ENCODE measurements at regions of chr12 and their contacts with region 1.

Region 1: GRCh38 chr12:46372544-46373110 is at the start of gene SLC38A2:
- DNase-seq: peak; percentile 98
- ATAC-seq: peak; percentile 84
- H3K4me3 Mint-ChIP-seq: peak within 1 kb of the TSS; percentile 97
- H3K27ac Mint-ChIP-seq: peak within 1 kb of the TSS; percentile 99
- H3K4me1 Mint-ChIP-seq: peaks cover 55% of the 10 kb centered on the region
- H3K27me3 Mint-ChIP-seq: no peaks in the 10 kb centered on the region
- total RNA-seq, gene SLC38A2: 211 to 296 TPM

Region 2: GRCh38 chr12:45878630-45879255 is 493.9 kb before region 1 on chr12:
- CTCF ChIA-PET with region 1: no interaction called
- POLR2A ChIA-PET with region 1: no interaction called
- intact Hi-C with region 1: no loop called
- DNase-seq: peak; percentile 26
- ATAC-seq: peak; percentile 57
- H3K4me3 Mint-ChIP-seq: no peak overlapping the region
- H3K27ac Mint-ChIP-seq: peak overlapping the region; percentile 75
- H3K4me1 Mint-ChIP-seq: peaks cover 30% of the 10 kb centered on the region
- H3K27me3 Mint-ChIP-seq: no peaks in the 10 kb centered on the region

Region 3: GRCh38 chr12:46198913-46199312 is 173.7 kb before region 1 on chr12:
- CTCF ChIA-PET with region 1: no interaction called
- POLR2A ChIA-PET with region 1: no interaction called
- intact Hi-C with region 1: no loop called
- DNase-seq: no peak
- ATAC-seq: no peak
- H3K4me3 Mint-ChIP-seq: no peak overlapping the region
- H3K27ac Mint-ChIP-seq: peak overlapping the region; percentile 56
- H3K4me1 Mint-ChIP-seq: peaks cover 12% of the 10 kb centered on the region
- H3K27me3 Mint-ChIP-seq: no peaks in the 10 kb centered on the region

Region 4: DNA sequence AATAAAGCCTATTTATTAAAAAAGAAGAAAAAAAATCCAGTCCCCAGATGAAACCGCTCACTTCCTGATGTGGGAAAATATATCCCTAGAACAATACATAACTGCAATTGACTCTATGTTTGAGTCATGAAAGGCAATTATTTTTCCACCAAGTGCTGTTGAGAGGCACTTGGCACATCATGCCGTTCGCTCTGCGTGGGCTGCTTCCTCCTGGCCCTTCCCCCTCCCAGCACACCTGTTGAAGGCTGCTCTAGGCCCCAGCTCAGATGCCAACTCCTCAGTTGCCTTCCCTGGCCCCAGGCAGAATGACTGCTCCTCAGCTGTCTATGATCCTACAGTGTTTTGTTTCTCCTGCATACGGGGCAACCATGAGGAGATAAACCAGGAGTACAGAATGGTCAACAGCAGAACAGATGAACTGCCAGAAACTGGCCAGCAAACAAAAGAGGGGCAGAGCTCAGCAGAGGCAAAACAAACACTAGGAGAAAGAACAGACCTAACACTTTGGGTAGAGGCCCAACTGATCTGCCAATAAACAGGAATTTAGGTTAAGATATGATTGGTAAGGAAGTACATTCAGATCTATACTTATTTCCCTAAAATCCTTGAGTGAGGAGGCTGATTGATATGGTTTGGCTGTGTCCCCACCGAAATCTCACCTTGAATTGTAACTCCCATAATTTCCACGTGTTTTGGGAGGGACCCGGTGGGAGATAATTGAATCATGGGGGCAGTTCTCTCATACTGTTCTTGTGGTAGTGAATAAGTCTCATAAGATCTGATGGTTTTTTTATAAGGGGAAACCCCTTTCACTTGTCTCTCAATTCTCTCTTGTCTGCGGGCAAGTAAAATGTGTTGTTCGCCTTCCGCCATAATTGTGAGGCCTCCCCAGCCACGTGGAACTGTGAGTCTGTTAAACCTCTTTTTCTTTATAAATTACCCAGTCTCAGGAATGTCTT is 162.4 kb before region 1 on chr12:
- CTCF ChIA-PET with region 1: interaction called, 3 read pairs
- POLR2A ChIA-PET with region 1: interaction called, 14 read pairs
- intact Hi-C with region 1: loop called (anchors 1 to 2 kb)
- DNase-seq: peak; percentile 88
- ATAC-seq: peak; percentile 71
- H3K4me3 Mint-ChIP-seq: peak overlapping the region; percentile 58
- H3K27ac Mint-ChIP-seq: peak overlapping the region; percentile 97
- H3K4me1 Mint-ChIP-seq: peaks cover 79% of the 10 kb centered on the region
- H3K27me3 Mint-ChIP-seq: no peaks in the 10 kb centered on the region

Region 5: DNA sequence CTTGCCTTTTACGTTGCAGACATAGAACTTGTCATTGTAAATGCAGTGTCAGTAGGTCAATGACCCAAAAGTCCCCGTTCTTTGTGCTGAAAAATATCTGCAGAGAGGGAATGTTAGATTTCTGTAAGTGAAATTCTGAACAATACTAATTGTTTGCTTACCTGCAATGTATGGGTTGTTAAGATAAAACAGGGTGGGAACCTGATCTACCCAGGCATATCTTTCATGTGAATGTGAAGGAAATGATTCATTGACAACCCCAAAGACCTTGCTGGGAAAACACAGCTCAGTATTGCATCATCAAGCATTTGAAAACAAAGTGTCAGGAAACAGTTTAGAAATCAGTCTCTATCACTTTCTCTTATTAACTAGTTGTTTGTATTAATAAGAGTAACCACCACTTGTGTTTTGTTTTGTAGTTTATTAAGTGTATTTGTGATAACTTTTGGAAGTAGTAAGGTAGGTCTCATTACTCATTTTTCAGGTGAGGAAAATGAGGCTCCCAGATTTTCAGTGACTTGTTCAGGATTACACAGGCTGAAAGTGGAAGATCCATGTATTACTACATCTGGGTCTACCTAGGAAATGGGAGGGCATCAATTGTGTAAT is 57.8 kb after region 1 on chr12:
- CTCF ChIA-PET with region 1: no interaction called
- POLR2A ChIA-PET with region 1: no interaction called
- intact Hi-C with region 1: loop called in 1 of 2 experiments (anchors 1 kb)
- DNase-seq: peak; percentile 22
- ATAC-seq: peak; percentile 92
- H3K4me3 Mint-ChIP-seq: peak overlapping the region; percentile 38
- H3K27ac Mint-ChIP-seq: peak overlapping the region; percentile 92
- H3K4me1 Mint-ChIP-seq: peaks cover 24% of the 10 kb centered on the region
- H3K27me3 Mint-ChIP-seq: no peaks in the 10 kb centered on the region

Region 6: GRCh38 chr12:46523863-46524770 is 151.5 kb after region 1 on chr12:
- CTCF ChIA-PET with region 1: interaction called, 3 read pairs
- POLR2A ChIA-PET with region 1: interaction called, 5 read pairs
- intact Hi-C with region 1: loop called (anchors 1 to 2 kb)
- DNase-seq: peak; percentile 66
- ATAC-seq: peak; percentile 89
- H3K4me3 Mint-ChIP-seq: peak overlapping the region; percentile 57
- H3K27ac Mint-ChIP-seq: peak overlapping the region; percentile 91
- H3K4me1 Mint-ChIP-seq: peaks cover 43% of the 10 kb centered on the region
- H3K27me3 Mint-ChIP-seq: no peaks in the 10 kb centered on the region

Region 7: GRCh38 chr12:47216150-47216677 is 843.6 kb after region 1 on chr12:
- CTCF ChIA-PET with region 1: no interaction called
- POLR2A ChIA-PET with region 1: no interaction called
- intact Hi-C with region 1: loop called in 1 of 2 experiments (anchors 5 kb)
- DNase-seq: peak; percentile 81
- ATAC-seq: peak; percentile 43
- H3K4me3 Mint-ChIP-seq: peak overlapping the region; percentile 89
- H3K27ac Mint-ChIP-seq: peak overlapping the region; percentile 96
- H3K4me1 Mint-ChIP-seq: peaks cover 38% of the 10 kb centered on the region
- H3K27me3 Mint-ChIP-seq: no peaks in the 10 kb centered on the region

Region 8: DNA sequence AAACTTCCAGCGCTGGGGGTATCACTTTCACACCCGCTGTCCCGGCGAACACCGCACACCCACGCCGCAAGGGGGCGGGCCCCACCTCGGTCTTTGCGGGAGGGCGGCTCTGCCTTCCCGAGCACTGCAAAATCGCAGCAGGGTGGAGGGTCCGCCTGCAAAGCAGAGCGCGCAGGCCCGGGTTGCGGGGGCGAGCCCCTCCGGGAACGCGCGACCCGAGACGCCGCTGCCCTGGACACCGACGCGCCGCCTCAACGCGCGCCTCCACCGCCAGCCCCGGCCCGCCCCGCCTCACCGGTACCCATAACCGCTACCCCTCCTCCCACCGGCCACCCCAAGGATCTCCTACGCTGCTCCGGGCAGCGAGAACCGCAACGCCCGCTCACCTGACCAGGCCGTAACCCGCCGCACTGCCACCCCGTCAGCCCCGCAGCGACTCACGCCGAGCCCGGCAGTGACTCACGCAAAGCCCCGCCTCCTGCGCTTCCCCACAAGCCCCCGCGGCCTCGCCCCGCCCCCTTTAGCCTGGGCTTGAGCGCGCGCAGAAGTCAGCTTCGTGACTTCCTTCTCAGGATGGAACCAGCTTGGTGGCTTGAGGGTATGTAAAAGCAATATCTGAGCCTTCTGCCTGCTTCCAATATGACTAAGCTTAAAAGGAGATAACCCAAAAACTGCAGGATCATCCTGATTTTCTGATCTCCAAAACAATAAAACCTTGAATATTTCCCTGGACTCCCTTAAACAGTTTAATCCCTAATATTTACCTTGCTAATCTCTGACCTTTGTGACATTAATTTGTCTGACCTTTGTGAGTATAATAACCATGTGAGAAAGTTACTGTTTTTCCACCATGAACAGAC is 1333.2 kb after region 1 on chr12 and contains the start of gene RPAP3:
- CTCF ChIA-PET with region 1: no interaction called
- POLR2A ChIA-PET with region 1: no interaction called
- intact Hi-C with region 1: loop called in 1 of 2 experiments (anchors 5 kb)
- DNase-seq: peak; percentile 100
- ATAC-seq: peak; percentile 92
- H3K4me3 Mint-ChIP-seq: peak within 1 kb of the TSS; percentile 89
- H3K27ac Mint-ChIP-seq: peak within 1 kb of the TSS; percentile 99
- H3K4me1 Mint-ChIP-seq: peaks cover 46% of the 10 kb centered on the region
- H3K27me3 Mint-ChIP-seq: no peaks in the 10 kb centered on the region
- total RNA-seq, gene RPAP3: 55.3 to 62.8 TPM